Naive thymus-derived CD4-positive, alpha-beta T cell (primary cell): ENCODE measurements at regions of chr15 and their contacts with region 1.

Region 1: GRCh38 chr15:35519541-35520149 is 26.3 kb downstream of the DPH6 start:
- DNase-seq: peak in 6 of 9 donors; percentile 5 to 45 (median 30)
- ATAC-seq: peak; percentile 42
- H3K4me3 ChIP-seq: no peak overlapping the region
- H3K4me3 Mint-ChIP-seq: no peak overlapping the region
- H3K27ac ChIP-seq: no peak overlapping the region
- H3K27ac Mint-ChIP-seq: no peak overlapping the region
- H3K4me1 ChIP-seq: no peaks in the 10 kb centered on the region
- H3K4me1 Mint-ChIP-seq: peaks cover 0 to 13% (median 4%) of the 10 kb centered on the region in 7 donors
- H3K27me3 ChIP-seq: no peaks in the 10 kb centered on the region
- H3K27me3 Mint-ChIP-seq: no peaks in the 10 kb centered on the region

Region 2: DNA sequence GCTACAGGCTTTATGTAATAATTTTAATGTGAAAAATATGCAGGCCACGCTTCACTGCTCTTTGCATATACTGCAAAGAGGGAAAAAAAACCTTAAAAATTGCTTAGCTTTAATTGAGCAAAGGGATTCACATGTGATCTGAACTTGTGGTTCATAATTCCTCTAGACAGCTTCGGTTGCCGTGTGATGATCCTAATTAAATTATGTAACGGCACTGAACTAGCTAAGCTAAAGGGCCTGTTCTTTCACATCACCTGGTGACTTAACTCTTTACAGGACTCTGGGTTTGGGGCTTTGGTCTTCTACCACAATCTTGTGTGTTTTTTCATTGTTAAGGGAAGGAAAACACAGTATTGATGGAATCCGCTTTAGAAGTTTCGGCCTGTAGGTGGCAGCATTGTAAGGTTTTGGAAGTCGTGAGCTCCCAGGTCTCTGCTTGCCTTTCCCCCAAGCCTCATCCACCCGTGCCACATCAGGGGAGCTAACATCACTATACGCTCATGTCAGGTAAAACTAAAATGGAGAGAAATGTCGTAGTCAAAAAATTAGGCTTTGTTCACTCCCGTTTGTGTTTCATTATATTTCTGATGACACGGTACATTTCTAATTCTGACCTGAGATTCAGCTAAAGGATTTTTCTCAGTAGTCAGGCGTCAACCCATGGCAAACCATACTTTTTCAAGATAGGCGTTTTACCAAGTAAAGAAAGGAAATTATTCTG is 231.9 kb after region 1 on chr15:
- CTCF ChIA-PET with region 1: no interaction called
- POLR2A ChIA-PET with region 1: no interaction called
- intact Hi-C with region 1: loop called in 1 of 2 experiments (anchors 1 kb)
- DNase-seq: peak in 5 of 9 donors; percentile 2 to 35 (median 10)
- ATAC-seq: no peak
- H3K4me3 ChIP-seq: no peak overlapping the region
- H3K4me3 Mint-ChIP-seq: peak overlapping the region in 1 of 10 donors; percentile 29
- H3K27ac ChIP-seq: no peak overlapping the region
- H3K27ac Mint-ChIP-seq: no peak overlapping the region
- H3K4me1 ChIP-seq: no peaks in the 10 kb centered on the region
- H3K4me1 Mint-ChIP-seq: no peaks in the 10 kb centered on the region
- H3K27me3 ChIP-seq: no peaks in the 10 kb centered on the region
- H3K27me3 Mint-ChIP-seq: peaks cover 4 to 19% (median 12%) of the 10 kb centered on the region in 5 donors

Region 3: DNA sequence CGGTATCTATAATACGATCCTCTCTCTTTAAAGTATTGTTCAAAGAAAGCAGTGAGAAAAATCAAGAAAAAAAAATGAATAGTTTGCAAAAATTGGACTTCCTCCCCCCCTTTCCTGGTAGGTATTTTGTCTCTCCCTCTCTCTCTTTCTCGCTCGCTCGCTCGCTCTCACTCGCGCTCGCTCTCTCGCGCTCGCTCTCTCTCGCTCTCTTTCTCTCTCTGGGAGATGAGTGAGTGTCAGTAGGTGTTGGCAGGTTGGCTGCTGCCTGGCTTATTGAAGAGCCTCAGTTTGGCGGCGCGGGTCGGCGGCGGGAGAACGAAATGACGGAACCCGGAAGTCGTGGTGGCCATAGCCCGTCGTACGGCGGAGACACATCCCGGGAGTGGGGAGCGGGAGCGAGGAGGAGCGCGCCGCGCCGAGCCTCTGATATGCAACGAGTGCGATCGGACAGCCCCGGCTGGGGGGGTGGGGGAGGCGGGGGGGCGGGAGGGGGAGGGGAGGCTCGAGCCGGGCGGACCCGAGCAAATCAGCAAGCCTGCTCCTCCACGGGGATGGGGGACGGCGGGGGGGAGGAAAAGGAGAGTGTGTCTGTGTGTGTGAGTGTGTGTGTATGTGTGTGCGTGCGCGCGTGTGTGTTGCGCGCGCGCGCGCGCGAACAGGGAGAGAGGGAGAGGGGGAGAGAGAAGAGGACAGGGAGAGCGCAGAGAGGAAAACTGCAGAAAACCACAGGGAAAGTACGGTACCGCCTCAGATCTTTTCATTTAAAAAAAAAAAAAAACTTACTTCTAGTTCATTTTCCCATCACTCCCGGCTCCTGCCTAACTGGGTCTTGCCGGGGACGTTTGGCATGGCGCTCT is 1580.7 kb after region 1 on chr15 and contains the start of gene MEIS2:
- CTCF ChIA-PET with region 1: no interaction called
- POLR2A ChIA-PET with region 1: no interaction called
- intact Hi-C with region 1: loop called in 1 of 2 experiments (anchors 10 kb)
- DNase-seq: peak in 2 of 9 donors; percentile 13 to 15
- ATAC-seq: peak; percentile 22
- H3K4me3 ChIP-seq: peak within 1 kb of the TSS; percentile 60
- H3K4me3 Mint-ChIP-seq: peak within 1 kb of the TSS; percentile 86 to 97 (median 93)
- H3K27ac ChIP-seq: no peak within 1 kb of the TSS
- H3K27ac Mint-ChIP-seq: peak within 1 kb of the TSS in 8 of 9 donors; percentile 4 to 85 (median 50)
- H3K4me1 ChIP-seq: peaks cover 5 to 27% of the 10 kb centered on the region in 2 donors
- H3K4me1 Mint-ChIP-seq: peaks cover 32 to 67% (median 55%) of the 10 kb centered on the region in 7 donors
- H3K27me3 ChIP-seq: peaks cover 6 to 20% of the 10 kb centered on the region in 2 donors
- H3K27me3 Mint-ChIP-seq: peaks cover 81 to 98% (median 90%) of the 10 kb centered on the region in 5 donors
- total RNA-seq, gene MEIS2: 0.07 to 0.71 TPM in 2 of 5 experiments, not detected in the others